Left ventricle myocardium superior (tissue), 1 donor: ENCODE measurements at regions of chr13 and their contacts with region 1.

Region 1: GRCh38 chr13:40682449-40683240 is 16.2 kb upstream of the FOXO1 start:
- DNase-seq: no peak
- ATAC-seq: no peak

Region 2: GRCh38 chr13:40069173-40070044 is 613.2 kb before region 1 on chr13:
- intact Hi-C with region 1: loop called (anchors 5 kb)
- DNase-seq: peak; percentile 79
- ATAC-seq: peak; percentile 97

Region 3: GRCh38 chr13:42649831-42650230 is 1967.2 kb after region 1 on chr13:
- intact Hi-C with region 1: no loop called
- DNase-seq: no peak
- ATAC-seq: no peak